ENCODE measurements at regions of chr17 and their contacts with region 1.

Region 1: DNA sequence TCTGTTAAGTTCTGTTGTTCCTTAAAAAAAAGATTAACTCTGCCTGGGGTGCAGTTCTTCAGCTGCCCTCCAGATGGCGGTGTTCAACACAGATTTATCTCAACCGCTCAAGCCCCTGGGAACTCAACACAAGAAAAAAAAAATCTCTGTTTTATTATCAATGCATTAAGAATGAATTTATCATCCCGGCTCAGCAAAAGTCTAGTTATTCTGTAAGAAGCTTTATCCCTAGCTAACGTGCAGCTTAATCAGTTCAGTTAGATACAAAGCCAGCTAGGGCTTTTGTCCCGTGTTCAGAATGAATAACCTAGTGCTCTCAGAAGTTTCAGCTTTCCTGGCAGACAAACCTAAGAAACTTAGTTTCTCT is 475.9 kb upstream of the CCL2 start:
- ATAC-seq: peak in 7 of 8 experiments; percentile 45 to 57 (median 50)
- H3K4me3 ChIP-seq: no peak overlapping the region
- H3K27ac ChIP-seq: no peak overlapping the region
- H3K4me1 ChIP-seq: no peaks in the 10 kb centered on the region

Region 2: DNA sequence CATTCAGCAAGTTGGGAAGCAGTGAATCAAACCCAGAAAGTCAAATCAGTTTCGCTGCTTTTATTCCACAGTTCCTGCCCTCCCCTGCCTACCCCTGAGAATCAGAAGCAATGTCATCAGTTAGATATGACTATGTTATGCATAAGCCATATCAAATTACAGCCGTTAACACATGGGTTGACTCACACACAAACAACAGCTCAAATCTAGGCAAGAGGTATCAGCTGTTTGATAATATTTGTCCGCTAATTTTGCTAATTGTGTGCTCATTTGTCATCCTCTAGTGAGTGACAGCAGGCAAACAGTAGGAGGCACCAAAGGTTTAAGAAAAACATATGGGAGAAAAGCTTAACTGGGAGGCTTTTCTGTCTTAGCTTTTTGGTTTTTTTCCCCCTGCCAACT is 148.5 kb after region 1 on chr17:
- in situ Hi-C with region 1: loop called in 1 of 9 experiments (anchors 25 kb)
- ATAC-seq: peak in 4 of 8 experiments; percentile 49 to 87 (median 72)
- H3K4me3 ChIP-seq: no peak overlapping the region
- H3K27ac ChIP-seq: no peak overlapping the region
- H3K4me1 ChIP-seq: peaks cover 0 to 9% of the 10 kb centered on the region in 2 donors

Region 3: GRCh38 chr17:34171245-34171818 is 392.1 kb after region 1 on chr17:
- in situ Hi-C with region 1: loop called in 6 of 9 experiments (anchors 10 to 25 kb)
- ATAC-seq: peak in 1 of 8 experiments; percentile 32
- H3K4me3 ChIP-seq: no peak overlapping the region
- H3K27ac ChIP-seq: no peak overlapping the region
- H3K4me1 ChIP-seq: peaks cover 0 to 4% of the 10 kb centered on the region in 2 donors

Region 4: DNA sequence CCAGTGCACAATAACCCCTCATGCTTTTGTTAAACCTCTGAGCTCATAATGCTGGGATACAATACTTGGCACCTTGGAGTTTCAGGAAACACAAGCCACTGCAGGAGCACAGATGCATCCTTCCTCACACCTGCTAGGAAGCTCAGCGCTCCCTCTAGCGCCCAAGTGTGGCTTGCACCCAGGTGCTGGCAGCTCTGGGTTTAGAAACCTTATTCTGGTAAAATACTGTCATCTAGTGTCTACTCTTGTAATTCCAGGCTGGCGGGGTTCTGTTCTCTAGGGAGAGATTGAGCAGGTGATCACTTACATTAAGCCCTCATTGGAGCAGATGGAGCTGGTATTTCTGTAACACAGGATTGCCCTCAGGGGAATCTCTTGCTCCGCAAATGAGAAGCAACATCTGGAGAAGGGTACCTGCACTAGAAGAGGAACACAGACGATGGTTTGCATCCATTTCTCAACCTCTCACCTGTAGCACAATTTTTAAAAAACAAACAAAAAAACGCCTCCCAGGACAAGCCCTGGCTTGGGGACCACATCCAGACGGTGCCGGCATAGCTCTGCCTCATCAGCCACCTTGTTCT is 582.4 kb after region 1 on chr17:
- in situ Hi-C with region 1: loop called in 1 of 9 experiments (anchors 25 kb)
- ATAC-seq: peak; percentile 89 to 99 (median 98)
- H3K4me3 ChIP-seq: no peak overlapping the region
- H3K27ac ChIP-seq: no peak overlapping the region
- H3K4me1 ChIP-seq: no peaks in the 10 kb centered on the region

Measured in motor neuron (in vitro differentiated cells).